ENCODE measurements at regions of chr7 and their contacts with region 1.

Region 1: GRCh38 chr7:29239638-29240037 is 45.1 kb downstream of the CHN2 start:
- DNase-seq: no peak
- H3K4me3 ChIP-seq: no peak overlapping the region
- H3K27ac ChIP-seq: no peak overlapping the region
- H3K4me1 ChIP-seq: no peaks in the 10 kb centered on the region
- H3K27me3 ChIP-seq: no peaks in the 10 kb centered on the region
- CTCF ChIP-seq: peak; percentile 79 to 87

Region 2: DNA sequence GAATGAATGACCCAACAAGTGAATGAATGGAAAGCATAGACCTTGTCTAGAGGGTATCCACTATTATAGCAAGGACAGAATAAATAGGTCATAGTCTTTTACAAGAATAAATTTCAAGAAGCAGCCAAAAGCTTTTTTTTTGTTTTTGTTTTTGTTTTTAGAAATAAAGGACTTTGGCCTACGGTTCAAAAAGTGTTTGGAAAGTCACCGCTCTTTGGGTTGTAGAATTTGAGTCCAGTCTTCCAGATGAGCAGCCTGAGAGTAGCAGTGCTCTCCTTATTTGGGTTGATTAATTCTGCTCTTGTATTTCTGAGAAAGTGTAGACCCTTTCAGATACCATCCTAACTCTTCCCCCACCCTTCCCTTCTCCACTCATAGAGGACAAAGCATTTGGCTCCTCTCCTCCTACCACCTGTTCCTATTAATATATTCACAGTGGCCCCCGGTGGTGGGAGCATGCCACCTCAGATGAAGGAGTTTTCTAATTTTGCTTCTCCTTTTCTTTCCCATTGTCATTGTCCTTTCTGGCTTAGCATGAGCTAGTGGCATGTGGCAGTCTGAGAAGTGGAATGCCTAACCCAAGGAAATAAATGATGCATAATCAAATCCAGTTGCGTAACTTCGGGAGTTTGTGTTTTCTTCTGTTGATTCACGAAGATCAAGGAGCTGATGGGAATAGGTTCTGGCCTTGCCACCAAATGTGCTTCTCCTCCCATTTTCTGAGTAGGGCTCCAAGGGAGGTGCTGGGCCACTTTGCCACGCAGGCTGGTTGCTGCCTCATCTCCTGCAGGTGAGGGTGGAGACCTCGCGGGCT is 69.6 kb after region 1 on chr7:
- CTCF ChIA-PET with region 1: no interaction called
- dilution Hi-C with region 1: no loop called
- in situ Hi-C with region 1: no loop called
- intact Hi-C with region 1: loop called (anchors 5 kb)
- DNase-seq: no peak
- H3K4me3 ChIP-seq: no peak overlapping the region
- H3K27ac ChIP-seq: no peak overlapping the region
- H3K4me1 ChIP-seq: peaks cover 22% of the 10 kb centered on the region
- H3K27me3 ChIP-seq: no peaks in the 10 kb centered on the region
- CTCF ChIP-seq: peak in 1 of 2 donors; percentile 13

Region 3: DNA sequence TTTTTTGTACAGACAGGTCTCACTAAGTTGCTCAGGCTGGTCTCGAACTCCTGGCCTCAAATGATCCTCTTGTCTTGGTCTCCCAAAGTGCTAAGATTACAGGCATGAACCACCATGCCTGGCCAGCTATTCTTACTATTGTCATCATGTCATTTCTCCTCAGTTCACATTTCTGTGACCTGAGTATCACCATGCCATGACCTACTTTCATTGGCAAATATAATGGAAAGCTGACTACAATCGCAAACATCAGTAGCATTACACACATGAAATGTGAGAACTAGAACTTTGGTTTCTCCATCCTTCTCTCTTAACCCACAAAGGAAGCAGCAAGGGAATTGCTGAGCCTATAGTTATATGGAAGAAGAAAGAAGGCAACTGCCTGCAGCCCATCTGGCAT is 540.7 kb after region 1 on chr7:
- CTCF ChIA-PET with region 1: no interaction called
- dilution Hi-C with region 1: no loop called
- in situ Hi-C with region 1: no loop called
- intact Hi-C with region 1: no loop called
- DNase-seq: no peak
- H3K4me3 ChIP-seq: no peak overlapping the region
- H3K27ac ChIP-seq: no peak overlapping the region
- H3K4me1 ChIP-seq: no peaks in the 10 kb centered on the region
- H3K27me3 ChIP-seq: peaks cover 6% of the 10 kb centered on the region
- CTCF ChIP-seq: no peak

Measured in mammary epithelial cell (primary cell).